WTC11 (cell line): ENCODE measurements at regions of chr5 and their contacts with region 1.

Region 1: GRCh38 chr5:72523960-72524582 is 16.9 kb upstream of the ZNF366 start:
- DNase-seq: no peak
- ATAC-seq: peak; percentile 71
- H3K4me3 Mint-ChIP-seq: no peak overlapping the region
- H3K27ac Mint-ChIP-seq: no peak overlapping the region
- H3K4me1 Mint-ChIP-seq: no peaks in the 10 kb centered on the region
- H3K27me3 Mint-ChIP-seq: no peaks in the 10 kb centered on the region
- CTCF ChIP-seq: no peak

Region 2: DNA sequence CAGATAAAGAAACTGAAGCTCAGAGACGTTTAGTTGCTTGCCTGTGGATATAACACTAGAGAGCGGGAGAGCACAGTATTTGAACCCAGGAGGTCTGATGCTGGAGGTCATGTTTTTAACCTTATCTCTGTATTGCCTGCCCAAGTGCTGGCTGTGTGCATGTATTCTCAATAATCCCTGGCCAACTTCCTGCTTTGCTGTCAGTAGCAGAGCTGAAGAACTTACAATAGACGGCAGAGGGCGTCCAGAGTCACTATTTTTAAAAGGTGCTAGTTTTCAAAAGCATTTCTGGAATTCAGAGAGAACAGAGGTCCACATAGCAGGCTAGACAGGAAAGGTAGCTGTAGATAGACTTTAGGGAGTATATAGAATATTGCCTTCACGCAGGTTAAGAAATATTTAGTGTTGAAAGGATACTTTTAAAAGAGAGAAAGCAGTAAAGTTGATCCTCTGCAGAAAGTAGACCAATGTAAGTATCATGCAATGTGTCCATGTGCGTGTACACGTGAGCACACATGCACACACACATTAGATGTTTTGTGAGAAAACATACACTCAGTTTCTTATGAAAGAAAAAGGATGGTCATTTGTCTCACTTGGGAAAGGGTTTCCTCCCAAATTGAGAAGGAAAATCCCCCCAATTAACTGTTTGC is 157.6 kb before region 1 on chr5:
- CTCF ChIA-PET with region 1: interaction called, 30 read pairs
- POLR2A ChIA-PET with region 1: interaction called, 3 read pairs
- DNase-seq: peak; percentile 36
- ATAC-seq: peak; percentile 64
- H3K4me3 Mint-ChIP-seq: no peak overlapping the region
- H3K27ac Mint-ChIP-seq: no peak overlapping the region
- H3K4me1 Mint-ChIP-seq: peaks cover 50% of the 10 kb centered on the region
- H3K27me3 Mint-ChIP-seq: no peaks in the 10 kb centered on the region
- CTCF ChIP-seq: peak; percentile 36

Region 3: GRCh38 chr5:72402959-72403628 is 121.0 kb before region 1 on chr5:
- CTCF ChIA-PET with region 1: interaction called, 14 read pairs
- POLR2A ChIA-PET with region 1: no interaction called
- DNase-seq: peak; percentile 46
- ATAC-seq: peak; percentile 38; the same call in 1 of the 2 replicates
- H3K4me3 Mint-ChIP-seq: no peak overlapping the region
- H3K27ac Mint-ChIP-seq: no peak overlapping the region
- H3K4me1 Mint-ChIP-seq: peaks cover 7% of the 10 kb centered on the region
- H3K27me3 Mint-ChIP-seq: peaks cover 4% of the 10 kb centered on the region; the same call in 1 of the 2 replicates
- CTCF ChIP-seq: peak; percentile 38

Region 4: GRCh38 chr5:72597456-72597948 is 73.4 kb after region 1 on chr5:
- CTCF ChIA-PET with region 1: no interaction called
- POLR2A ChIA-PET with region 1: no interaction called
- DNase-seq: no peak
- ATAC-seq: peak; percentile 52; the same call in 1 of the 2 replicates
- H3K4me3 Mint-ChIP-seq: no peak overlapping the region
- H3K27ac Mint-ChIP-seq: no peak overlapping the region
- H3K4me1 Mint-ChIP-seq: peaks cover 13% of the 10 kb centered on the region
- H3K27me3 Mint-ChIP-seq: no peaks in the 10 kb centered on the region
- CTCF ChIP-seq: no peak